ENCODE measurements at regions of chr17 and their contacts with region 1.

Region 1: GRCh38 chr17:63621766-63622519 is at the start of gene MAP3K3:
- DNase-seq: peak; percentile 98 to 99
- ATAC-seq: peak; percentile 95 to 98 (median 96)
- H3K4me3 ChIP-seq: peak within 1 kb of the TSS; percentile 61 to 90 (median 77)
- H3K27ac ChIP-seq: peak within 1 kb of the TSS; percentile 84 to 95 (median 91)
- H3K4me1 ChIP-seq: peaks cover 4 to 46% (median 40%) of the 10 kb centered on the region in 9 donors
- H3K27me3 ChIP-seq: no peaks in the 10 kb centered on the region
- CTCF ChIP-seq: peak in 6 of 9 donors; percentile 25 to 52 (median 34)
- total RNA-seq, gene MAP3K3: 30.6 to 79.3 (median 50.3) TPM

Region 2: GRCh38 chr17:63665527-63666214 is 43.7 kb after region 1 on chr17:
- intact Hi-C with region 1: loop called in 2 of 10 experiments (anchors 1 to 10 kb)
- DNase-seq: peak in 1 of 2 donors; percentile 38
- ATAC-seq: peak; percentile 68 to 89 (median 83)
- H3K4me3 ChIP-seq: no peak overlapping the region
- H3K27ac ChIP-seq: peak overlapping the region in 7 of 10 donors; percentile 12 to 85 (median 36)
- H3K4me1 ChIP-seq: peaks cover 0 to 46% (median 23%) of the 10 kb centered on the region in 9 donors
- H3K27me3 ChIP-seq: no peaks in the 10 kb centered on the region
- CTCF ChIP-seq: no peak

Region 3: GRCh38 chr17:63675607-63676413 is 53.9 kb after region 1 on chr17:
- intact Hi-C with region 1: loop called in 3 of 10 experiments (anchors 5 to 10 kb)
- DNase-seq: peak; percentile 64 to 91
- ATAC-seq: peak; percentile 90 to 96 (median 94)
- H3K4me3 ChIP-seq: peak overlapping the region in 7 of 10 donors; percentile 15 to 42 (median 34)
- H3K27ac ChIP-seq: peak overlapping the region; percentile 36 to 92 (median 85)
- H3K4me1 ChIP-seq: peaks cover 4 to 58% (median 49%) of the 10 kb centered on the region in 9 donors
- H3K27me3 ChIP-seq: no peaks in the 10 kb centered on the region
- CTCF ChIP-seq: no peak

Region 4: GRCh38 chr17:63741221-63742049 is 119.5 kb after region 1 on chr17 and contains the start of gene STRADA:
- intact Hi-C with region 1: loop called in 1 of 10 experiments (anchors 10 kb)
- DNase-seq: peak; percentile 98 to 99
- ATAC-seq: peak; percentile 99 to 100 (median 100)
- H3K4me3 ChIP-seq: peak within 1 kb of the TSS; percentile 69 to 97 (median 84)
- H3K27ac ChIP-seq: peak within 1 kb of the TSS; percentile 72 to 96 (median 92)
- H3K4me1 ChIP-seq: peaks cover 6 to 22% (median 16%) of the 10 kb centered on the region in 9 donors
- H3K27me3 ChIP-seq: no peaks in the 10 kb centered on the region
- CTCF ChIP-seq: peak in 1 of 9 donors; percentile 19
- total RNA-seq, gene STRADA: 12.2 to 19.0 (median 17.7) TPM